Thyroid gland (tissue), 4 donors: ENCODE measurements at regions of chr5 and their contacts with region 1.

Region 1: GRCh38 chr5:134527146-134527960 is 1.9 kb downstream of the JADE2 start:
- DNase-seq: peak; percentile 83 to 85
- H3K4me3 ChIP-seq: peak overlapping the region; percentile 14 to 87 (median 46)
- H3K27ac ChIP-seq: peak overlapping the region; percentile 97 to 100 (median 98)
- H3K4me1 ChIP-seq: peaks cover 41 to 47% of the 10 kb centered on the region in 2 donors
- H3K27me3 ChIP-seq: no peaks in the 10 kb centered on the region
- CTCF ChIP-seq: peak; percentile 68 to 98 (median 94)
- POLR2A ChIP-seq: peak in 1 of 2 donors; percentile 48

Region 2: GRCh38 chr5:134236318-134236717 is 291.0 kb before region 1 on chr5:
- intact Hi-C with region 1: no loop called
- DNase-seq: no peak
- H3K4me3 ChIP-seq: no peak overlapping the region
- H3K27ac ChIP-seq: no peak overlapping the region
- H3K4me1 ChIP-seq: peaks cover 0 to 11% of the 10 kb centered on the region in 2 donors
- H3K27me3 ChIP-seq: no peaks in the 10 kb centered on the region
- CTCF ChIP-seq: no peak
- POLR2A ChIP-seq: no peak

Region 3: GRCh38 chr5:134370871-134371833 is 156.2 kb before region 1 on chr5 and contains the start of gene UBE2B:
- intact Hi-C with region 1: loop called (anchors 2 kb)
- DNase-seq: peak; percentile 99
- H3K4me3 ChIP-seq: peak within 1 kb of the TSS; percentile 62 to 96 (median 91)
- H3K27ac ChIP-seq: peak within 1 kb of the TSS; percentile 94 to 98 (median 98)
- H3K4me1 ChIP-seq: peaks cover 10 to 14% of the 10 kb centered on the region in 2 donors
- H3K27me3 ChIP-seq: no peaks in the 10 kb centered on the region
- CTCF ChIP-seq: peak in 2 of 6 experiments; percentile 5 to 34
- POLR2A ChIP-seq: peak; percentile 14 to 89
- total RNA-seq, gene UBE2B: 36.8 to 83.2 (median 41.2) TPM

Region 4: GRCh38 chr5:134411546-134412266 is 115.6 kb before region 1 on chr5 and contains the start of gene CDKN2AIPNL:
- intact Hi-C with region 1: loop called (anchors 10 kb)
- DNase-seq: peak; percentile 90 to 93
- H3K4me3 ChIP-seq: peak within 1 kb of the TSS; percentile 55 to 95 (median 88)
- H3K27ac ChIP-seq: peak within 1 kb of the TSS; percentile 80 to 89 (median 86)
- H3K4me1 ChIP-seq: peaks cover 20 to 25% of the 10 kb centered on the region in 2 donors
- H3K27me3 ChIP-seq: no peaks in the 10 kb centered on the region
- CTCF ChIP-seq: peak in 4 of 6 experiments; percentile 59 to 92 (median 80)
- POLR2A ChIP-seq: peak in 1 of 2 donors; percentile 74
- total RNA-seq, gene CDKN2AIPNL: 27.9 to 42.3 (median 34.8) TPM

Region 5: GRCh38 chr5:134465816-134466240 is 61.5 kb before region 1 on chr5:
- intact Hi-C with region 1: loop called (anchors 10 kb)
- DNase-seq: peak; percentile 87 to 89
- H3K4me3 ChIP-seq: peak overlapping the region in 2 of 3 donors; percentile 34 to 37
- H3K27ac ChIP-seq: peak overlapping the region; percentile 96 to 100 (median 100)
- H3K4me1 ChIP-seq: peaks cover 16 to 38% of the 10 kb centered on the region in 2 donors
- H3K27me3 ChIP-seq: no peaks in the 10 kb centered on the region
- CTCF ChIP-seq: peak in 2 of 6 experiments; percentile 18 to 20
- POLR2A ChIP-seq: peak in 1 of 2 donors; percentile 87

Region 6: DNA sequence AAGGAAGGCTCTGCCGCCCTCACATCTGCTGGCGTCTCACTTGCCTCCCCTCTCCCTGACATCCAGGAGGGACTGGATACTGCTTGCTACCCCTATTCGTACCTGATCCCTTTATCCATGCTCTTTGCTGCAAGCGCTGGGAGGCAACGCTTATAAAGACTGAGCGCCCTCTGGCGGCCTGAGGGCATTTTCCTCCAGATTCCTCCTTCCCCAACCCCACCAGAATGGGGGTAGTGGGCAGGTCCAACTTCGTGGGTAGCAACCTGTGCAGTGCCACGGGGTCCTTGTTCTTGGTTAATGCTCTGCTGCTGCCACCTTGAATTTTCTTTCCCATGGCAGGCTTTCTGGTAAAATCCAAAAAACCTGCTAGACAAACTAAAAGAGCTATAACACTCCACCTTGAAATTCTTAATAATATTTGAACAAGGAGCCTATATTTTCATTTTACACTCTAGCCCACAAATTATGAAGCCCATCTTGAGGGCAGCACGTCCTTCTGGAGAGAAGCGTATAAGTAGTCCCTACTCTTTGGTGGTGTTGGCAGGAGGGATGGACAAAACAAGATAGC is 50.5 kb after region 1 on chr5:
- intact Hi-C with region 1: loop called (anchors 5 kb)
- DNase-seq: peak; percentile 80 to 84
- H3K4me3 ChIP-seq: no peak overlapping the region
- H3K27ac ChIP-seq: no peak overlapping the region
- H3K4me1 ChIP-seq: peaks cover 0 to 25% of the 10 kb centered on the region in 2 donors
- H3K27me3 ChIP-seq: no peaks in the 10 kb centered on the region
- CTCF ChIP-seq: peak; percentile 48 to 88 (median 78)
- POLR2A ChIP-seq: no peak